Gastrocnemius medialis (tissue), 4 donors: ENCODE measurements at regions of chr21 and their contacts with region 1.

Region 1: GRCh38 chr21:41926117-41926806 is 27.6 kb downstream of the C2CD2 start:
- DNase-seq: no peak
- ATAC-seq: peak; percentile 67 to 89
- H3K4me3 ChIP-seq: peak overlapping the region; percentile 33 to 51 (median 46)
- H3K27ac ChIP-seq: peak overlapping the region; percentile 65 to 76 (median 70)
- H3K4me1 ChIP-seq: peaks cover 2 to 26% of the 10 kb centered on the region in 2 donors
- H3K27me3 ChIP-seq: no peaks in the 10 kb centered on the region
- CTCF ChIP-seq: no peak
- POLR2A ChIP-seq: no peak

Region 2: DNA sequence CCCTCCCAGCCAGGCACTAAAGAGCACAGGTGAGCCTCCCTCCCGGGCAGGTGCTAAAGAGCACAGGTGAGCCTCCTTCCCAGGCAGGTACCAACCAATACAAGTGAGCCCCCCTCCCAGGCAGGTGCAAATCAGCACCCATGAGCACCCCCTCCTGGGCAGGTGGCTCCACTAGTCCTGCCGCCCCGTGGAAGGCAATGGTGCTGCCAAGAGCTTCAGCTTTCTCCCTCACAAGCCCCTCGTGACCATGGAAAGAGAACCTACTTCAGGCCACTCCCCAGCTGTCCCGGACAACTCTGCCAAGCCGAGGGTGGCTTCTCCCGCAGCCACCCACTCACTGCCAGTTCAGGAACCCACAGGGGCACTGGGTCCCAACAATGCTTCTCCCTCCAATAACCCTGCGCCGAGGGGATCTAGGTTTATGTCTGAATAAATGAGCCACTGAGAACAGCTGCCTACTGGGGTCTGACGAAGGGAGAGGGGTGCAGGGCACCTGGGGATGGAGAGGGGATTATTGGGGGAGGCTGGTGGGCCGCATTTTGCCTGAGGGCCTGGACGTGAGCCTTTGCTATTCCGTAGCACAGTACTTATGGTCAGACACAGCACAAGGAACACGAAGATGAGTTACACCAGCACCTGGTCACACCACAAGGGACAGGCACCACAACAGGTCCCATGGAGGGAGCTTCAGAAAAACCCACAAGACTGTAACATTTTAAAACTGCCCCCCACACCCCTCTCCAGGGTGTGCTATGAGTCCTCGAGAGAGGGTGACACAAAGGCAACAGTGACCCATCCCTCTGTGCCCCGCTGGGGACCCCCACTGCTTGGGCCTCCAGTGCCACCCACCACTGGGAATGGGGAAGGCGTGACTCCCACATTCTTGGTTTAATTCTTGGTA is 93.4 kb before region 1 on chr21:
- in situ Hi-C with region 1: loop called in 1 of 4 experiments (anchors 25 kb)
- intact Hi-C with region 1: no loop called
- DNase-seq: no peak
- ATAC-seq: no peak
- H3K4me3 ChIP-seq: no peak overlapping the region
- H3K27ac ChIP-seq: no peak overlapping the region
- H3K4me1 ChIP-seq: no peaks in the 10 kb centered on the region
- H3K27me3 ChIP-seq: no peaks in the 10 kb centered on the region
- CTCF ChIP-seq: no peak
- POLR2A ChIP-seq: no peak

Region 3: DNA sequence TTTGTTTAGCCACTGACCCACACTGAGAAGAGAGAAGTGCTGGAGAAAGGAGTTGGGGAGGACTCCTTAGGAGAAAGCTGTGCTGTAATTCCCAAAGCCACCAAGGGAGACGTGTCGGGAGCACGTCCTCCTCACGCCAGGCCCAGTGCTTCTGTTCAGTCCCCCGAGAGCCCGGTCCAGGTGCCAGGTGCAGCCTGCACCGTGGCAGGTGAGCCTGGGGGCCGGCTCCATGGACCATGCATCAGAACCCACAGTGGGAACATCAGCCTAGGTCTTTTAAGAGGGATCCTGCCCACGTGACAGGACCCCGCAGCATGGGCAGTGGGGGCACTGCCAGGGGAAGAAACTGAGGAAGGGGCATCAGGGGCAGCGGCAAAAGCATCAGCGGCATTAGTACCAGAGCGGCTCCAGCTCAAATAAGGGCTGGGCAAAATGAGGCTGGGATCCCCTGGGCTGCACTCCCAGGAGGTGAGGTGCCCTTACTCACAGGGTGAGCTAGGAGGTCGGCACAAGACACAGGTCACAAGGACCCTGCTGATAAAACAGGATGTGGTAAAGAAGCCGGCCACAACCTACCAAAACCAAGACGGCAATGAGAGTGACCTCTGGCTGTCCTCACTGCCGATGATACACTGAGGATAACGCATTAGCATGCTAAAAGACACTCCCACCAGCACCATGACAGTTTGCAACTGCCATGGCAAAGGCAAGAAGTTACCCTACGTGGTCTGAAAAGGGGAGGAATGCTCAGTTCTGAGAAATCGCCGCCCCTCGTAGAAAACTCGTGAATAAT is 22.5 kb before region 1 on chr21:
- in situ Hi-C with region 1: no loop called
- intact Hi-C with region 1: no loop called
- DNase-seq: no peak
- ATAC-seq: no peak
- H3K4me3 ChIP-seq: no peak overlapping the region
- H3K27ac ChIP-seq: no peak overlapping the region
- H3K4me1 ChIP-seq: no peaks in the 10 kb centered on the region
- H3K27me3 ChIP-seq: no peaks in the 10 kb centered on the region
- CTCF ChIP-seq: no peak
- POLR2A ChIP-seq: no peak

Region 4: DNA sequence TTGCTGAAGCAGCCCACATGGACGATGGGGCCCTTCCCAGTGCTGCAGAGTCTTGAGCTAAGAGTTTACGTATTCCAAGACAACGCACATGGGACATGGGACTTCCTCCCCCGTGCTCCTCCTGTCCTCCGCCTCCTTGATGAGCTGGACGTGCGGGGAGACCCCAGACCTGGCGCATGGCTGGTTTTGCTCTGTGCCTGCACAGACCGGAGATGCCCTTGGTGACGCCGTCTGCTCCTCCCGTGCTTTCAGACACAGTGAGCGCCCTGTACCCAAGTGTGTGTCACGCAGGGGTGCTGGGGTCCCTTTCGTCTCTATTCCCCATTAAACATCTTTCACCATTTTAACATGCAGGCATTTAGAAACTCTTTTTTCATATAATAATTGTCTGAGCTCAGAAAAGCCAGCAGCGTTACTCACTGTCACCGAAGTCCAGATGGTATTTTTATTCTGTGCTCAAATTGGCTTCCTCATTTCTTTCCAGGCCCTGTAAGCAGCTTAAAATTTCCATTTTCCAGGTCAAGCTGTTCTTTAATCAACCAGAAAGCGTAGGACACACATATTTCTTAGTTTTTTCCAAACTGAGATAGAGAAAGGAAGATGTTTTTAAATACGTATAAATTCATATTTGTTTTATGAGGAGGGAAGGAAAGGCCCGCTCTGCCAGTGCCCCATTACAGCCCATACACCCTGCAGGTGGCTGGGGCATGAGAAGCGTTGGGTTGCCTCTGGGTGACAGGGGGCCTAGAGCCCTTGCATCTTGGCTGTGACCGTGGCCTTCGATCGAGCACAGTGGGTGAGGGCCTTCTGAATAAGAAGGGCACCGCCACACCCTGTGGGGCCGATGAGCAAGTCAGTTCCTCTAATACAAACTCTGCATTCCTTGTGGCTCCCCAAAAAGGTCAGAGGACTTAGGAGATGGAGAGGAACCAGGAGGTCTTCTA is 101.8 kb after region 1 on chr21:
- in situ Hi-C with region 1: no loop called
- intact Hi-C with region 1: no loop called
- DNase-seq: no peak
- ATAC-seq: no peak
- H3K4me3 ChIP-seq: no peak overlapping the region
- H3K27ac ChIP-seq: no peak overlapping the region
- H3K4me1 ChIP-seq: no peaks in the 10 kb centered on the region
- H3K27me3 ChIP-seq: peaks cover 0 to 3% (median 0%) of the 10 kb centered on the region in 3 donors
- CTCF ChIP-seq: no peak
- POLR2A ChIP-seq: no peak

Region 5: DNA sequence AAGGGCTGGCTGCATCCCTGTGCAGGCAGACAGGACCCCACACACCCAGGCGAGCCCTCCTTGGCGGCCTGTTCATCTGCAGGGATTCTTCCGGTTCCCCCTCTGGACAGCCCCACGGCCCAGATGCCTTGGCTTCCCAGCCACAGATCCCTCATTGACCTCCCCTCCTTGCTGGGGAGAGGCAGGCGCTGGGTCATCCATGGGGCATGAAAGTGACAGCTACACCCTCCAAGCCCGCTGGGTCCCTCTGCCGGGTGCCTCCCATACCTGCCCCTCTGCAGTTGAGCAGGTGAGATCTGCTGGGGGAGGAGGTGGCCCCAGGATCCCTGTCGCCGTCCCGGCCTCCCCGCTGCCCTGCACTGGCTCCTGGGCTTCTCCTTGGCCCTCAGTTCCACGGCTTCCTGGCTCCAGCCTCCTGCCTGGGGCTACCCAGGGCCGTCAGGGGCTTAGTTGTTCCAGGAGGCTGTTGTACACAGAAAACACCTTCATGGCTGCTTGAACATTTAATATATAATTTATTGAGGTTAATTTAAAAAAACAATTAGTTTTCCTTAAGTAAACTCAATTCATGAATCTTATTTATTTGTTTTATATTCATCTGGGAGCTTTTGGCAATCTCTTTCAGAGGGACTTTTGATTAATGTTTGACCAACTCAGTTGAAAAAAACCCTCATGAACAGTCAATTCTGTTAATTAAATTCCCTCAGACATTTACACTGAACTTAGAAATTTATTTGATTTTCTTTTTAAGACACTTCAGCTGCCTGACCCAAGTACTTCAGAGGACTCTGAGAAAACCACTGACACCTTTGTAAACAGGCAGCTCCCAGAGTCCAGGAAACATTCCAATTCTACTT is 225.1 kb after region 1 on chr21:
- in situ Hi-C with region 1: no loop called
- intact Hi-C with region 1: no loop called
- DNase-seq: no peak
- ATAC-seq: no peak
- H3K4me3 ChIP-seq: no peak overlapping the region
- H3K27ac ChIP-seq: no peak overlapping the region
- H3K4me1 ChIP-seq: no peaks in the 10 kb centered on the region
- H3K27me3 ChIP-seq: no peaks in the 10 kb centered on the region
- CTCF ChIP-seq: no peak
- POLR2A ChIP-seq: no peak